Activated CD8-positive, alpha-beta T cell treated with anti-CD3 and anti-CD28 coated beads for 36 hours (primary cell): ENCODE measurements at regions of chr4 and their contacts with region 1.

Region 1: DNA sequence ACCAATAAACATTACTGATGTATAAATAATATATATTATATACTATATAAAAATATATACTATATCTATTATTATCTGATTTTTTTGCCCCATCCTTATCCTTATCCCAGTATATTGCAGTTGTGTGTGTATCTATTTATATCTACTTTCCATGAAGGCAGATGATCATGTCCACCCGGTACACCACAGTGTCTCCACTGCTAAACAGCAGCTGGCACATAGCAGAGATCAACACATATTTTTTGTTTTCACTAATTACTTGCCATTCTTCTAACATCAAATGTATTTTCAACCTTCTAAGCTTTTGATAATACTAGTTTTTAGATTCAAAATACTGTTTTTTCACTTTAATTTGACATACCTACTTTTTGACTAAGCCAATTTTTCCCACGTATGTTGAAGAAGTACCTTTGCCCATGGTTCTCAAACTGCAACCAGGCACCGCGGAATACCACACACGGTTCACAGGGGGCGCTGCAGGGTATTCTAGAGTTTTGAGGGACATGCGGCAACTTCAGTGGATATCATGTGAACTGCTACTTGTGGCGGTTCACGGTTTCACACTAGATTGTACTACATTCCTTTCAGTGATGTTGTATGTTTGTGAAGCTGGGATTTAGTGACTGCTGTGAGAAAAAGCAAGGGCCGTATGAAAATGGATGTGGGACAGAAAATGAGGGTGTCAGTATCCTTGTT is 182.5 kb upstream of the NPY2R start:
- DNase-seq: peak; percentile 52
- ATAC-seq: peak; percentile 55
- H3K4me3 Mint-ChIP-seq: no peak overlapping the region
- H3K27ac Mint-ChIP-seq: no peak overlapping the region
- H3K4me1 Mint-ChIP-seq: no peaks in the 10 kb centered on the region
- H3K27me3 Mint-ChIP-seq: peaks cover 3% of the 10 kb centered on the region
- CTCF ChIP-seq: peak; percentile 44

Region 2: DNA sequence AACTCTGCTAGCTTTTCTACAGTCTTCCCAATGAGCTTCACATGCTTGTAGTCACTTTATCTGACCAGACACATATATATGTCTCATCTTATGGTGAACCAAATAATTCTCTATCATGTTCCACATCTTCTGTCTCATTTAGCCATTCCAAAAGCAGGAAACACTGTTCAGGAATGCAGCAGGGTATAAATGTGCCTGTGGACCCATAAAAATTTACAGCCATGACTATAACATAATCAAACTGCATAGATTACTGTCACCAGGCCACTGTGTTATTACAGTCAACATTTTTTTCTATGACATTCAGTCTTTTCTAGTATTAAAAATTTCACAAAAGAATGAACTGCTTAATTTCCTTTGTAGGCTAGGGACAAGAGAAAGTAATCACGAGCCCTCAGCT is 12.5 kb after region 1 on chr4:
- CTCF ChIA-PET with region 1: interaction called, 10 read pairs
- POLR2A ChIA-PET with region 1: no interaction called
- intact Hi-C with region 1: no loop called
- DNase-seq: no peak
- ATAC-seq: no peak
- H3K4me3 Mint-ChIP-seq: no peak overlapping the region
- H3K27ac Mint-ChIP-seq: no peak overlapping the region
- H3K4me1 Mint-ChIP-seq: no peaks in the 10 kb centered on the region
- H3K27me3 Mint-ChIP-seq: no peaks in the 10 kb centered on the region
- CTCF ChIP-seq: no peak